Endothelial cell of umbilical vein (primary cell): ENCODE measurements at regions of chr2 and their contacts with region 1.

Region 1: DNA sequence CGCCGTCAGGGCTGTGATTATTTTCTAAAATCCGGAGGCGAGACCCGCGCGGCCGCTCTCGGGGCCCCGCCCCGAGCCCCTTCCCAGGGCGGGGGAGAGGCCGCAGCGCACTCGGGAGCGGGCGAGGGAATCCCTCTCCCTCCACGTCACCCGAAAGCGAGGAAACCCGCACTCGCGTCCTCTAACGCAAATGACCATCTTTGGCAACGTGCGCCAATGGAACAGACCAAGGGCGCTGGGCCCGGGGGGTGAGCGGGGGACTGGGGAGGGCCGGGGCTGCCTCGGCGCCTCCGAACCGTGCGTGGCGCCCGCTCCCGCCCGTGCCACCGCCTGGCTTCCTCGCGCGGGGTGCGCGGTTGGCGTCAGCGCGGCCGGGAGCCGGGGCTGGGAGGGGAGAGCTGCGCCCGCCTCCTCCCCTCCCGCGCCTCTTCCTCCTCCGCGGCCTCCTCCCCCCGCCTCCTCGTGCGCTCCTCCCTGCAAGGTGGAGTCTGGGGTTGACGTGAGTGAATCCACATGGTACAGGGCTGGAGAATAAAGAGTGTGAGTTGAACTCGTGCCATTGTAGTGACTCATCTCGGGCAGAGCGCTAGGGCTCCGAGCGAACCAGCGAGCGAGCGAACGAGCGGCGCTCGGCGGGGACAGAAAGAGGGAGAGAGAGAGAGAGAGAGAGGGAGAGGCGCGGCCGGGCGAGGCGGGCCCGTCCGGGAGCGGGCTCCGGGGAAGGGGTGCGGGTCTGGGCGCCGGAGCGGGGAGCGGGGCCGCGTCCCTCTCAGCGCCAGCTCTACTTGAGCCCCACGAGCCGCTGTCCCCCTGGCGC is at the start of gene FOSL2:
- DNase-seq: peak; percentile 100
- H3K4me3 ChIP-seq: peak within 1 kb of the TSS; percentile 77 to 97 (median 90)
- H3K27ac ChIP-seq: peak within 1 kb of the TSS; percentile 95
- H3K4me1 ChIP-seq: peaks cover 31% of the 10 kb centered on the region
- H3K27me3 ChIP-seq: no peaks in the 10 kb centered on the region
- CTCF ChIP-seq: no peak
- POLR2A ChIP-seq: peak; percentile 90
- total RNA-seq, gene FOSL2: 83.7 and 85.3 TPM in 2 replicates

Region 2: GRCh38 chr2:27703638-27704341 is 688.7 kb before region 1 on chr2:
- CTCF ChIA-PET with region 1: interaction called, 15 read pairs
- POLR2A ChIA-PET with region 1: interaction called, 4 read pairs
- dilution Hi-C with region 1: no loop called
- intact Hi-C with region 1: loop called (anchors 1 kb)
- DNase-seq: peak; percentile 90
- H3K4me3 ChIP-seq: no peak overlapping the region
- H3K27ac ChIP-seq: no peak overlapping the region
- H3K4me1 ChIP-seq: peaks cover 17% of the 10 kb centered on the region
- H3K27me3 ChIP-seq: no peaks in the 10 kb centered on the region
- CTCF ChIP-seq: peak; percentile 82 to 88
- POLR2A ChIP-seq: no peak

Region 3: DNA sequence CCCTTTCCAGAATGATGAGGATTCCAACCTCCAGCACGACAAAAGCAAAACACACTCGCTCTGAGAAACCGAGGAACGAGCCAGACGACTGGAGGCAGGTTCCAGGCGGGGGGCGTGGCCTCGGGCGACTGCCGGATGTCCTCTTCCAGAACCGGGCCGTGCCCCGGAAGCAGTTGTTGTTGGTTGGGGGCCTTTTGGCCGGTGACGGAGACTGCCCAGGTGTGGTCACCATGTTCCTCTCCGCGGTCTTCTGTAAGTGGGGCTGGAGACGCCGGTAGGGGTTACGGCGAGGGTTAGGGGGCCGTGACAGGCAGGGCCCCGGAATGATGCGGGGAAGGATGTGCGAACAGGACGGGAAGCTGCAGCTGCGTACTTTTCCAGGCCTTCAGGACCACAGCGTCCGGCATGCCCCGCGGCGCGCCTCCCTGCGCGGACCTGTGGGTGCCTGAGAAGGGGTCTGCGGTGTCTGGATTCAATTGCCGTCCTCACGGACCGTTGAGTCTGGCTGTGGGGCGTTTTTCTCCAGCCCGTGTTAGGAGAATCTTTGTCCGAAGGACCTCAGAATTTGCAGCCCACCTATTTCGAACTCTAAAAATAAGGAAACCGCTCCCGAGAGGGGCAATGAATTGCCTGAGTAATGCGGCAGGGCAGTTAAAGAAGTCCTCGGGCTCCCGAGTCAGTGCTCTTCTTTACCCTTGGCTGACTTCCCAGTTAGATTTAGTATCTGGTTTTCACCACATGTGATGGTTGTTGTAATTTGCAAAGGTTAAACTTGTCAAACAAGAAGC is 620.8 kb before region 1 on chr2 and contains the start of gene MRPL33:
- CTCF ChIA-PET with region 1: no interaction called
- POLR2A ChIA-PET with region 1: no interaction called
- dilution Hi-C with region 1: no loop called
- intact Hi-C with region 1: loop called (anchors 1 kb)
- DNase-seq: peak; percentile 93
- H3K4me3 ChIP-seq: peak within 1 kb of the TSS; percentile 91 to 95 (median 95)
- H3K27ac ChIP-seq: peak within 1 kb of the TSS; percentile 90
- H3K4me1 ChIP-seq: peaks cover 25% of the 10 kb centered on the region
- H3K27me3 ChIP-seq: no peaks in the 10 kb centered on the region
- CTCF ChIP-seq: no peak
- POLR2A ChIP-seq: peak; percentile 90
- total RNA-seq, gene MRPL33: 96.7 and 97.4 TPM in 2 replicates

Region 4: GRCh38 chr2:27807476-27807875 is 585.0 kb before region 1 on chr2:
- CTCF ChIA-PET with region 1: no interaction called
- POLR2A ChIA-PET with region 1: no interaction called
- dilution Hi-C with region 1: no loop called
- intact Hi-C with region 1: no loop called
- DNase-seq: peak; percentile 57
- H3K4me3 ChIP-seq: no peak overlapping the region
- H3K27ac ChIP-seq: no peak overlapping the region
- H3K4me1 ChIP-seq: peaks cover 18% of the 10 kb centered on the region
- H3K27me3 ChIP-seq: no peaks in the 10 kb centered on the region
- CTCF ChIP-seq: peak; percentile 57 to 63
- POLR2A ChIP-seq: no peak

Region 5: GRCh38 chr2:27954771-27955383 is 437.6 kb before region 1 on chr2:
- CTCF ChIA-PET with region 1: interaction called, 11 read pairs
- POLR2A ChIA-PET with region 1: interaction called, 5 read pairs
- dilution Hi-C with region 1: no loop called
- intact Hi-C with region 1: loop called (anchors 1 kb)
- DNase-seq: peak; percentile 99
- H3K4me3 ChIP-seq: no peak overlapping the region
- H3K27ac ChIP-seq: peak overlapping the region; percentile 95
- H3K4me1 ChIP-seq: peaks cover 47% of the 10 kb centered on the region
- H3K27me3 ChIP-seq: no peaks in the 10 kb centered on the region
- CTCF ChIP-seq: peak; percentile 33 to 37
- POLR2A ChIP-seq: peak; percentile 94

Region 6: DNA sequence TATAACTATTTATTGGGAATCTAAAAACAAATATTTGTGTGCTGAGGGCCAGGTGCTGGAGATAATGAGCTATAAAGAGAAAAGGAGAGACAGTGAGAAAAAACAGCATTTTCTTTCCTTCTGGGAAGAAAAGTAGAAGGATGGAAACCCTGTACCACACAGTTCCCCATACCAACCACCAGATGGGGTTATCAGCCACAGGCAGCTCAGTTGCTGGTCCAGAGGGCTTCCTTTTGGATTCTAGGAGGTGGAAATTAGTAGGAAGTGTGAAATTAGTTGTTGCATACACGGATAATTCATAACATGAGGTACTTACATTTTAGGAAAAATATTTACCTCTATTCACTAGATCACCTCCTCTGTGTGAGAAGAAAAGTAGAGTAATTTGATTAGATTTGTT is 236.9 kb before region 1 on chr2:
- CTCF ChIA-PET with region 1: no interaction called
- POLR2A ChIA-PET with region 1: interaction called, 3 read pairs
- dilution Hi-C with region 1: no loop called
- intact Hi-C with region 1: loop called (anchors 1 kb)
- DNase-seq: no peak
- H3K4me3 ChIP-seq: no peak overlapping the region
- H3K27ac ChIP-seq: no peak overlapping the region
- H3K4me1 ChIP-seq: no peaks in the 10 kb centered on the region
- H3K27me3 ChIP-seq: no peaks in the 10 kb centered on the region
- CTCF ChIP-seq: peak; percentile 46 to 47
- POLR2A ChIP-seq: no peak

Region 7: GRCh38 chr2:28366496-28367282 is 25.8 kb before region 1 on chr2:
- CTCF ChIA-PET with region 1: interaction called, 3 read pairs
- POLR2A ChIA-PET with region 1: interaction called, 4 read pairs
- dilution Hi-C with region 1: no loop called
- intact Hi-C with region 1: loop called (anchors 2 kb)
- DNase-seq: peak; percentile 53
- H3K4me3 ChIP-seq: no peak overlapping the region
- H3K27ac ChIP-seq: no peak overlapping the region
- H3K4me1 ChIP-seq: peaks cover 14% of the 10 kb centered on the region
- H3K27me3 ChIP-seq: no peaks in the 10 kb centered on the region
- CTCF ChIP-seq: no peak
- POLR2A ChIP-seq: no peak